ENCODE measurements at regions of chr2 and their contacts with region 1.

Region 1: DNA sequence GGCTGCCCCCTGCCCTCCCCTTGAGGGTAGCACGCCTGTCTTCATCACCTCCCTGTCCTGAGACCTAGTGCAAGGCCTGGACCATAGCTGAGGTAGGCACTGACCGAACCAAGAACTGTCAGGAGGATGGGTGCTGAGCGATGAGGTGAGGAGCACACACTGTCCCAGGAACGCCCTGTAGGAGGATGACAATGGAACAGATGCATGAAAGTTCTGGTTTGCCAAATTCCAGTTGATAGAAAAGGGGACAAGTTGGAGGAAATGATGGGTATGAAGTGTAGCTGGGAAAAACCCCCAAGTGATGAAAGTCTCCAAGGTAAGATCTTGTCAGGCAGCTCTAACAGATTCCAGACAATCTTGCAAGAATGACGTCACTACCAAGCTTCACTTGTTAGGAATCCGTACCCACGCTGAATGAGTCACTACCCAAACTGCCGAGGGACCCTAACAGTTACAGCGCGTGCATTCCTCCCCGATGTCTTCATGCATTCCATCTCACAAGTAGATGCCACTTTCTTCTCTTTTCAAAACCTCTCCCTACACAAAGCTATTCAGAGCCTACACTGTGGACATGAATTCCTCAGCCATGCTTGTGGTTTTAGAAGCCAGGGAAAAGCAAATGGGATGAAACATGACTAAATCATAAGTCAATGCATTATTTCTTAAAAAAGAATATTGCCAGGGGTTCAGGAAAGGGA is 27.6 kb downstream of the MRPL33 start:
- DNase-seq: peak; percentile 100
- ATAC-seq: peak; percentile 90
- H3K4me3 ChIP-seq: no peak overlapping the region
- H3K27ac ChIP-seq: peak overlapping the region; percentile 96
- H3K4me1 ChIP-seq: peaks cover 48% of the 10 kb centered on the region
- H3K27me3 ChIP-seq: no peaks in the 10 kb centered on the region
- CTCF ChIP-seq: no peak
- POLR2A ChIP-seq: no peak
- RAD21 ChIP-seq: peak; percentile 26; the same call in 1 of the 2 replicates

Region 2: DNA sequence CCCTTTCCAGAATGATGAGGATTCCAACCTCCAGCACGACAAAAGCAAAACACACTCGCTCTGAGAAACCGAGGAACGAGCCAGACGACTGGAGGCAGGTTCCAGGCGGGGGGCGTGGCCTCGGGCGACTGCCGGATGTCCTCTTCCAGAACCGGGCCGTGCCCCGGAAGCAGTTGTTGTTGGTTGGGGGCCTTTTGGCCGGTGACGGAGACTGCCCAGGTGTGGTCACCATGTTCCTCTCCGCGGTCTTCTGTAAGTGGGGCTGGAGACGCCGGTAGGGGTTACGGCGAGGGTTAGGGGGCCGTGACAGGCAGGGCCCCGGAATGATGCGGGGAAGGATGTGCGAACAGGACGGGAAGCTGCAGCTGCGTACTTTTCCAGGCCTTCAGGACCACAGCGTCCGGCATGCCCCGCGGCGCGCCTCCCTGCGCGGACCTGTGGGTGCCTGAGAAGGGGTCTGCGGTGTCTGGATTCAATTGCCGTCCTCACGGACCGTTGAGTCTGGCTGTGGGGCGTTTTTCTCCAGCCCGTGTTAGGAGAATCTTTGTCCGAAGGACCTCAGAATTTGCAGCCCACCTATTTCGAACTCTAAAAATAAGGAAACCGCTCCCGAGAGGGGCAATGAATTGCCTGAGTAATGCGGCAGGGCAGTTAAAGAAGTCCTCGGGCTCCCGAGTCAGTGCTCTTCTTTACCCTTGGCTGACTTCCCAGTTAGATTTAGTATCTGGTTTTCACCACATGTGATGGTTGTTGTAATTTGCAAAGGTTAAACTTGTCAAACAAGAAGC is 27.4 kb before region 1 on chr2 and contains the start of gene MRPL33:
- CTCF ChIA-PET with region 1: interaction called, 3 read pairs
- POLR2A ChIA-PET with region 1: no interaction called
- dilution Hi-C with region 1: no loop called
- in situ Hi-C with region 1: no loop called
- intact Hi-C with region 1: loop called (anchors 2 kb)
- DNase-seq: peak; percentile 85
- ATAC-seq: peak; percentile 97
- H3K4me3 ChIP-seq: peak within 1 kb of the TSS; percentile 73
- H3K27ac ChIP-seq: peak within 1 kb of the TSS; percentile 88
- H3K4me1 ChIP-seq: peaks cover 12% of the 10 kb centered on the region
- H3K27me3 ChIP-seq: no peaks in the 10 kb centered on the region
- CTCF ChIP-seq: no peak
- POLR2A ChIP-seq: peak; percentile 70
- RAD21 ChIP-seq: no peak
- total RNA-seq, gene MRPL33: 13.3 and 48.6 TPM in 2 replicates